ENCODE measurements at regions of chr3 and their contacts with region 1.

Region 1: GRCh38 chr3:16147226-16147994 is 27.1 kb upstream of the GALNT15 start:
- DNase-seq: no peak

Region 2: GRCh38 chr3:16101813-16102561 is 45.4 kb before region 1 on chr3:
- CTCF ChIA-PET with region 1: no interaction called
- POLR2A ChIA-PET with region 1: no interaction called
- DNase-seq: no peak

Region 3: DNA sequence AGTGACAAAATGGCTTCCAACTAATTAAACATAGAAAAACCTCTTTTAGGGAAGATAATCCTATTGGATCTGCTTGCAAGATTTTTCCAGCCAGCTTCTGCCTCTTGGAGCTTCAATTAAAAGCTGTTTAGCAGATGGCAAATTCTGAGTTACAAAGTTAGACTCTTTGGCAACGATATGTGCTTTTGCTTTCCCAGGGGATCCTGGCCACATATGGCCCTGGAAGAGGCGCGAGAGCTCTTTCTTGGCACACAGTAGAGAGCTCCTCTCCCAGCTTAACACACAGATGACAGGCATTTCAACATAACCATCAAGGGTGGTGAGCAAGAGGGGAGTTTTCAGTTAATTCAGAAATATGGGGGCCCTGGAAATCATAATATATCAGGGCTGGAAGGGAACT is 14.5 kb before region 1 on chr3:
- CTCF ChIA-PET with region 1: interaction called, 11 read pairs
- POLR2A ChIA-PET with region 1: no interaction called
- DNase-seq: no peak

Region 4: GRCh38 chr3:16168211-16168610 is 20.8 kb after region 1 on chr3:
- CTCF ChIA-PET with region 1: no interaction called
- POLR2A ChIA-PET with region 1: no interaction called
- DNase-seq: no peak